Left colon (tissue), 2 donors: ENCODE measurements at regions of chr13 and their contacts with region 1.

Region 1: GRCh38 chr13:72151241-72151640 is 284.2 kb upstream of the DACH1 start:
- DNase-seq: no peak
- ATAC-seq: no peak

Region 2: DNA sequence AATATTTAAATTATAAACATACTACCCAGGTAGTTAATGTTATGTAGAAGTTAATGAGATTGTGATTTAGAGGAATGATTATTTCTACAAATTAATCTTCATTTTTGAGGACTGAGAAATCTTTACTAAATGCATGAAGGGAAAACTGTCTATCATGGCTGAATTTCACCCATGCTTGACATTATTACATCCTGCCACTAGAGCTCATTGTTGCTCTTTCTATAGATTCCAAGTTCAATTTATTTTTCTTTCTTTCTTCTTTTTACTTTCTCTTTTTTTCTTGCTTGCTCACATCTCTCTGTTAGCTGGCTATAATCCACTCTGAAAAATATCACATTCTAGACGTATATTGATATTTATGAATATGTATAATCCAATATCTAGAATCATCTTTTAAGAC is 1537.9 kb before region 1 on chr13:
- intact Hi-C with region 1: loop called in 1 of 2 experiments (anchors 10 kb)
- DNase-seq: no peak
- ATAC-seq: no peak